PC-3 (cell line): ENCODE measurements at regions of chr11 and their contacts with region 1.

Region 1: GRCh38 chr11:76734456-76735420 is 48.4 kb upstream of the TSKU start:
- DNase-seq: no peak
- ATAC-seq: no peak
- H3K4me3 ChIP-seq: no peak overlapping the region
- H3K27ac ChIP-seq: no peak overlapping the region
- H3K4me1 ChIP-seq: no peaks in the 10 kb centered on the region
- H3K27me3 ChIP-seq: no peaks in the 10 kb centered on the region
- CTCF ChIP-seq: no peak

Region 2: GRCh38 chr11:76701122-76702040 is 33.4 kb before region 1 on chr11:
- CTCF ChIA-PET with region 1: no interaction called
- POLR2A ChIA-PET with region 1: no interaction called
- intact Hi-C with region 1: no loop called
- DNase-seq: peak; percentile 69
- ATAC-seq: peak; percentile 79
- H3K4me3 ChIP-seq: no peak overlapping the region
- H3K27ac ChIP-seq: no peak overlapping the region
- H3K4me1 ChIP-seq: peaks cover 24% of the 10 kb centered on the region
- H3K27me3 ChIP-seq: no peaks in the 10 kb centered on the region
- CTCF ChIP-seq: no peak

Region 3: DNA sequence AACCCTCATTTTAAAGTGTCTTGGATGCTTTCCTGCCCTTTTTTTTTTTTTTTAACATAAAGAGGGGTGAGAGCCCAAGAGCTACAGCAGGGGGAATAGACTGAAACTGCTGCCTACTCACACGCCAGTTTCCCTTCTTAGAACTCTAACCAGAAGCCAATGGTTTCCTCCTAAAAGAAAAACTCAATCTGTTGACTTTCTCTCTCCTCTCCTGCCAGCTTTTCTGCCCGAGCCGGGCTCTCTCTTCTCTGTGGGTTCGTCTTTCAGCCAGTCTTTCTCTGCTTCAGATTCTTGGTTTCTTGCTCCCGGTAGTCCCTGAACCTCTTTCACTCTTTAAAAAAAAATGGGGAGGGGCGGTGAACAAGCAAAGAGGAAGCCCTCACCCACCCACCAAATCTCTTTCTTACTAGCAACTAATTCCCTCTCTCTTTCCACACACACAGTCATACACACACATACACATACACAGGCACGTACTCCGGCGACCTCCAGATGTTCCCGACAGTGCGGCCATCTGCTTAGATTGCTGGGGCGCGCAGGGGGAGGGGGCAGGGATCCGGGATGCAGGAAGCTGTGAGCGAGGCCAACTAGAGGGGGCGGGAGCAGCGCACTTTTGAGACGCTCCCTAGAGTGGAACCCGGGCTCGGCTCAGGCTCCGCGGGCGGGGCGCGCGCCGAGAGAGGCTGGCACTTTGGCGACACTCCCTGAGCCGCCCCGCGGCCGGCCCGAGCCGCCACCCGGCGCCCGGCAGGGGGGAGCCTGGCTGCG is 48.0 kb after region 1 on chr11:
- CTCF ChIA-PET with region 1: no interaction called
- POLR2A ChIA-PET with region 1: interaction called, 7 read pairs
- intact Hi-C with region 1: loop called (anchors 5 kb)
- DNase-seq: peak; percentile 89
- ATAC-seq: peak; percentile 66
- H3K4me3 ChIP-seq: peak overlapping the region; percentile 92
- H3K27ac ChIP-seq: peak overlapping the region; percentile 0; the same call in 1 of the 2 replicates
- H3K4me1 ChIP-seq: peaks cover 14% of the 10 kb centered on the region
- H3K27me3 ChIP-seq: no peaks in the 10 kb centered on the region
- CTCF ChIP-seq: no peak

Region 4: GRCh38 chr11:76799066-76799804 is 64.5 kb after region 1 on chr11:
- CTCF ChIA-PET with region 1: interaction called, 35 read pairs
- POLR2A ChIA-PET with region 1: interaction called, 4 read pairs
- intact Hi-C with region 1: loop called (anchors 1 kb)
- DNase-seq: peak; percentile 81
- ATAC-seq: peak; percentile 87
- H3K4me3 ChIP-seq: peak overlapping the region; percentile 57
- H3K27ac ChIP-seq: no peak overlapping the region
- H3K4me1 ChIP-seq: peaks cover 9% of the 10 kb centered on the region
- H3K27me3 ChIP-seq: no peaks in the 10 kb centered on the region
- CTCF ChIP-seq: peak; percentile 96